PC-3 (cell line): ENCODE measurements at regions of chr19 and their contacts with region 1.

Region 1: GRCh38 chr19:11435058-11435832 is at the starts of genes ODAD3 and PRKCSH:
- DNase-seq: peak; percentile 100
- ATAC-seq: peak; percentile 93
- H3K4me3 ChIP-seq: peak within 1 kb of the TSS; percentile 87
- H3K27ac ChIP-seq: peak within 1 kb of the TSS; percentile 23
- H3K4me1 ChIP-seq: peaks cover 13% of the 10 kb centered on the region
- H3K27me3 ChIP-seq: no peaks in the 10 kb centered on the region
- CTCF ChIP-seq: peak; percentile 88
- total RNA-seq, gene ODAD3: 0.52 and 3.9 TPM in 2 replicates
- total RNA-seq, gene PRKCSH: 222 and 266 TPM in 2 replicates

Region 2: GRCh38 chr19:11339254-11340098 is 95.8 kb before region 1 on chr19 and contains the start of gene RAB3D:
- CTCF ChIA-PET with region 1: no interaction called
- POLR2A ChIA-PET with region 1: no interaction called
- intact Hi-C with region 1: loop called (anchors 1 kb)
- DNase-seq: peak; percentile 95
- ATAC-seq: peak; percentile 89
- H3K4me3 ChIP-seq: peak within 1 kb of the TSS; percentile 89
- H3K27ac ChIP-seq: peak within 1 kb of the TSS; percentile 11
- H3K4me1 ChIP-seq: peaks cover 25% of the 10 kb centered on the region
- H3K27me3 ChIP-seq: no peaks in the 10 kb centered on the region
- CTCF ChIP-seq: no peak
- total RNA-seq, gene RAB3D: 34.4 and 37.9 TPM in 2 replicates

Region 3: DNA sequence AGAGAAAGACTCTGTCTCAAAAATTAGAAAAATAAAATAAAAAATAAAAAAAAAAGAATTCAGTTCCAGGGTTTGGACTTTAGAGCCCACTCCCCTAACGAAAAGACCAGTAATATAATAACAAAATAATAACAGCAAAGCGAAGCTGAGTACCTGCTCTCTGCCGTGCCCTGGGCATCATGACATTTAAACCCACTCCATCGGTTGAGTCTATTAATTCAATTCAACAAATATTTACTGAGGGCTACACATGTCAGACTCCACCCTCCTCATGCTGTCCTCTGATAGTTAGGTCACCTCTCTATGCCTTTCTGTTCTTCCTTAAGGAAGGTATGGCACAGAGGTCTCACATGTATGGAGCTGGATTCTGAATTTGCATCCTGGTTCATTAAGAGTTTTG is 41.6 kb after region 1 on chr19:
- CTCF ChIA-PET with region 1: interaction called, 10 read pairs
- POLR2A ChIA-PET with region 1: no interaction called
- intact Hi-C with region 1: no loop called
- DNase-seq: no peak
- ATAC-seq: no peak
- H3K4me3 ChIP-seq: no peak overlapping the region
- H3K27ac ChIP-seq: no peak overlapping the region
- H3K4me1 ChIP-seq: no peaks in the 10 kb centered on the region
- H3K27me3 ChIP-seq: peaks cover 9% of the 10 kb centered on the region; the same call in 1 of the 2 replicates
- CTCF ChIP-seq: no peak

Region 4: GRCh38 chr19:11505032-11505503 is 69.8 kb after region 1 on chr19:
- CTCF ChIA-PET with region 1: no interaction called
- POLR2A ChIA-PET with region 1: no interaction called
- intact Hi-C with region 1: loop called (anchors 1 kb)
- DNase-seq: peak; percentile 99
- ATAC-seq: peak; percentile 96
- H3K4me3 ChIP-seq: peak overlapping the region; percentile 84
- H3K27ac ChIP-seq: peak overlapping the region; percentile 65
- H3K4me1 ChIP-seq: peaks cover 15% of the 10 kb centered on the region
- H3K27me3 ChIP-seq: no peaks in the 10 kb centered on the region
- CTCF ChIP-seq: no peak